ENCODE measurements at regions of chr9 and their contacts with region 1.

Region 1: GRCh38 chr9:18442629-18443491 is 31.1 kb upstream of the ADAMTSL1 start:
- DNase-seq: peak; percentile 71
- H3K4me3 ChIP-seq: no peak overlapping the region
- H3K27ac ChIP-seq: no peak overlapping the region
- H3K4me1 ChIP-seq: peaks cover 0 to 10% (median 2%) of the 10 kb centered on the region in 6 donors
- H3K27me3 ChIP-seq: peaks cover 0 to 19% (median 2%) of the 10 kb centered on the region in 7 donors
- CTCF ChIP-seq: peak in 9 of 11 experiments; percentile 47 to 81 (median 75)
- POLR2A ChIP-seq: no peak

Region 2: DNA sequence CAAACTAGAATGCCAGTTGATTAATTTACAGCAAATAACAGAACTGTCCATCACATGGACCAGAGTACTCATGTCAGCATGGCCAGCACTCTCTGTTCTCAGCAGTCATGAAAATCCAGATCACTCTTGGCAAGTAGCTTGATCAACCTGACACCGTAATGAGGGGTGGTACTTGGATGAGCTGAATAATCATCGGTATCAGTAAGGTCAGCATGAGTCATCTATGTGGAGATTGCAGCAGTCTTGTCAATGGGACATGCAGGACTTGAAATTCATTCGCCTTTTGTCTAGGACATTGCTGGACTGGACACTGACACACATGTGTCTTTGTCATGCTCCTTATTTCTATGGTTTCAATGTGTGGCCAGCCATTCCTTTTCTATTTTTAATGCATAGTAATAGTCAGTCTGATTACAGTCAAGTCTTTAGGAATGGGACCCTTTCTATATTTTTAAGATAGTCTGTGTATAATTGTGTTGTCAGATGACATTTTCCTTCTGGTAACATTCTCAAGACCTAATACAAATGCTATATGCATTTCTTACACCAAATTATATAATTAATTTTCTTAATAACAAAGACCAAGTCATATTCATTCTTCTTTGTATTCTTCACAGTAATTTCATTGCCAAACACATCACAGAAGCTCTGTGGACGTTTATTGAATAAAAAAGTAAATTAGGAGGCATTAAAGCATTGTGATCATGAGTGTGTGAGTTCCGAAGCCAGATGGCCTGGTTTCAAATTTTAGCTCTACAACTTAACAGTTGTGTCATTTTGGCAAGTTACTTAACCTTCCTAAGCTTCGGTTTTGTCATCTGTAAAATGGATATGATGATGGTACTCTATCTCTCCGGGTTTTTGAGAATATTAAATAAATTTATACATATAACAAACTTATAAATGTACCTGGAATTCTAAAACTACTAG is 88.5 kb after region 1 on chr9:
- intact Hi-C with region 1: no loop called
- DNase-seq: no peak
- H3K4me3 ChIP-seq: no peak overlapping the region
- H3K27ac ChIP-seq: no peak overlapping the region
- H3K4me1 ChIP-seq: no peaks in the 10 kb centered on the region
- H3K27me3 ChIP-seq: no peaks in the 10 kb centered on the region
- CTCF ChIP-seq: no peak
- POLR2A ChIP-seq: no peak

Region 3: DNA sequence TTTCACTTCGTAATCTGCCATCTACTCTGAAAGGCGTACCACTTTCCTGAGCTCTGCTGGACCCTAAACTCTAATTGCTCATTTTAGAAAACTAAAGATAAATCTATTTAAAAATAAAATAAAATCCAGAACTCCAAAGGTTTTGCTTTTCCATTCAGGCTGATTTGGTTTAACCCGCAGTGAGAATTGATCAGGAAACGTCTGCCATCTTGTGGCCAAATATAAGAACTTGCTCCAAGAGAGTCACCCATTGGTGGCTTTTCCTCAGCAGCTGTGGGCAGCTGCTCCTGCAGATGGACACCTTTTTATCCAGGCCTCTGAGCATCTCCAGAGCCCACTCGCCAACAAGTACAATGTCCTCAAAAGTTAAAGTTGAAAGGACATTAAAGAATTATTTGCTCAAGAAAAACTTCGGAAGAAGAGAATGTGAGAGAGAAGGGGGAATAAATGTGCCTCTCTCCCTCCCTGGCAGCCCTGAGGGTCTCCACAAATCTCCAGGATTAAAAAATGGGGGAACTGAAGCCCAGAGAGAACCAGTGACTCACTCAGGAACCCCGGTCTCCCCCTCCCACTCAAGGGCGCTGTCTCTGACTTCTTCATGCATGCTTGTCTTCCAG is 586.1 kb after region 1 on chr9:
- intact Hi-C with region 1: loop called (anchors 10 kb)
- DNase-seq: no peak
- H3K4me3 ChIP-seq: no peak overlapping the region
- H3K27ac ChIP-seq: no peak overlapping the region
- H3K4me1 ChIP-seq: peaks cover 0 to 9% (median 0%) of the 10 kb centered on the region in 6 donors
- H3K27me3 ChIP-seq: peaks cover 0 to 18% (median 0%) of the 10 kb centered on the region in 7 donors
- CTCF ChIP-seq: peak in 10 of 11 experiments; percentile 27 to 86 (median 73)
- POLR2A ChIP-seq: no peak